A549 (cell line): ENCODE measurements at regions of chr7 and their contacts with region 1.

Region 1: DNA sequence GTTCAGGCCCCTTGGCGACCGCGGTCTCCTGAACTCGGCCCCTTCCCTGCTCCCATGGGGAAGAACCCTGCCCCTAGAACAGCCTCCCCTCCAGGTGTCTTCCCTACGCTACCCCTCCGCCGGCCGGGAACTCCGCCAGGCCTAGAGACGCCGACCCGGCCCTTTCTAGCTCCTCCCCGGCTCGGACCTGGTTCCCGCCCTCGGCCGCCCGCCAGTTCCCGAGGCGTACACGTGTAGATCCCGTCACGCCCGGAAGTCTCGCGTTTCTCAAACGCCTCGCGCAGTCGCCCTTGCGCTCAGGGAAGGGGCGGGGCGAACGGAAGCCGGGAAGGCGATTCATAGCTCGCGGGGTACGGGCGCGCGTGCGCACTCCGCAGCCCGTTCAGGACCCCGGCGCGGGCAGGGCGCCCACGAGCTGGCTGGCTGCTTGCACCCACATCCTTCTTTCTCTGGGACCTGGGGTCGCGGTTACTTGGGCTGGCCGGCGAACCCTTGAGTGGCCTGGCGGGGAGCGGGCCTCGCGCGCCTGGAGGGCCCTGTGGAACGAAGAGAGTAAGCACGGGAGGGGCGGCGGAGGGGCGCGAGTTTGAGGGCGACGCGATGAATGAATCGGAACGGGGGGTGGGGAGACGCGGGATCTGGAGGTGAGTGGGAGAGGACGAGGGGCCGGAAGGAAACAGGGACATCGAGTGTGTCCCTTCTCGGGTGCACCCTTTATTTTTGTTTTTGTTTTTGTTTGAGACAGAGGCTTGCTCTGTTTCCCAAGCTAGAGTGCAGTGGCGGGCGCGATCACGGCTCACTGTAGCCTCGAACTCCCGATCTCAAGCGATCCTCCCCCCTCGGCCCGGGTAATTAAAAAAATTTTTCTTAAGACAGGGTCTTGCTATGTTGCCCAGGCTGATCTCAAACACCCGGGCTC is at the start of gene POP7:
- DNase-seq: peak; percentile 91 to 99
- ATAC-seq: peak; percentile 95 to 96
- H3K4me3 ChIP-seq: peak within 1 kb of the TSS; percentile 76
- H3K27ac ChIP-seq: peak within 1 kb of the TSS; percentile 91 to 96
- H3K4me1 ChIP-seq: peaks cover 12% of the 10 kb centered on the region
- CTCF ChIP-seq: no peak
- EP300 ChIP-seq: no peak
- POLR2A ChIP-seq: peak; percentile 72
- RAD21 ChIP-seq: no peak
- polyA plus RNA-seq, gene POP7: 29.5 and 37.3 TPM in 2 replicates

Region 2: GRCh38 chr7:100342765-100343164 is 363.2 kb before region 1 on chr7:
- CTCF ChIA-PET with region 1: no interaction called
- POLR2A ChIA-PET with region 1: no interaction called
- DNase-seq: no peak
- ATAC-seq: no peak
- H3K4me3 ChIP-seq: no peak overlapping the region
- H3K27ac ChIP-seq: no peak overlapping the region
- H3K4me1 ChIP-seq: peaks cover 26% of the 10 kb centered on the region
- CTCF ChIP-seq: no peak
- EP300 ChIP-seq: no peak
- POLR2A ChIP-seq: no peak
- RAD21 ChIP-seq: no peak

Region 3: DNA sequence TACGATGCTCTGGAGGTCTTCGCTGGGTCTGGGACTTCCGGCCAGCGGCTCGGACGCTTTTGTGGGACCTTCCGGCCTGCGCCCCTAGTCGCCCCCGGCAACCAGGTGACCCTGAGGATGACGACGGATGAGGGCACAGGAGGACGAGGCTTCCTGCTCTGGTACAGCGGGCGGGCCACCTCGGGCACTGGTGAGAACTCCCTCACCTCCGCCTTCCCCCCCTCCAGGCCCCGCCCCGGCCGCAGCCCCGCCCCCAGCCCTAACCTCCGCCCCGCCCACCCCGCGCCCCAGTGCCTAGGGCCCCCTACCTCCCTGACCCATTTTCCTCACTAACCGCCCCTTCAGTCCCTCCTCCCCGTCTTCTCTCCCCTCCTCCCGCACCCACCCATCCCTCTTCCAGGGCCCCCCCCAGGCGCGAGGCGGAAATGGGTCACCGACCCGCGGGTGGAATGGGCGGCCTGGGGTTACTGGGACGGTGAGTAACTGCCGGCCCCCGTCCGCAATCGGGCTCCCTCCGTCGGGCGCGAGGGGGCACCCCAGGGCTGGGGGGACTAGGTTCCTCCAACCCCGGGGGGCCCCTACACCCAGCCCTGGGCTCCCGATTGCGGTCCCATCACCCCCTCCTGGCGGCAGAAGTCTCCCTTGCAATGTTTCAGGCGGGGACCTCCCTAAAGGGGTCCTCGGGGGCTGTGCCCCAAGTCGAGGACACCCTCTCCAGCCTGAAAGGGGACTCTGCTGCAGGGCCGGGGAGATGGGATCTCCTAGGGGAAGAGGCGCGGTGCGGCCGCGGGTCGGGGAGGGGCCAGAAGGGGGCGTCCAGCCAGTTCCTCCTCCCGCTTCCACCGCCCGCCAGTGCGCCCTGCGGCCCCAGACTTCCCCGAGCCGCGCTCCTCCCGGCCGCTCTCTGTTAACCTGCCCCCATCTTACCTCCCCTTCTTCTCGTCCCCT is 101.7 kb before region 1 on chr7:
- CTCF ChIA-PET with region 1: interaction called, 16 read pairs
- POLR2A ChIA-PET with region 1: no interaction called
- DNase-seq: peak; percentile 78 to 90
- ATAC-seq: peak; percentile 80 to 90
- H3K4me3 ChIP-seq: peak overlapping the region; percentile 74
- H3K27ac ChIP-seq: peak overlapping the region; percentile 84 to 86
- H3K4me1 ChIP-seq: 0 out of 3 replicates have a peak, but pooled peaks cover 8% of the 10 kb centered on the region
- CTCF ChIP-seq: peak; percentile 53
- EP300 ChIP-seq: no peak
- POLR2A ChIP-seq: peak; percentile 33; the same call in 1 of the 2 replicates
- RAD21 ChIP-seq: no peak; a peak in 3 of 5 replicates

Region 4: DNA sequence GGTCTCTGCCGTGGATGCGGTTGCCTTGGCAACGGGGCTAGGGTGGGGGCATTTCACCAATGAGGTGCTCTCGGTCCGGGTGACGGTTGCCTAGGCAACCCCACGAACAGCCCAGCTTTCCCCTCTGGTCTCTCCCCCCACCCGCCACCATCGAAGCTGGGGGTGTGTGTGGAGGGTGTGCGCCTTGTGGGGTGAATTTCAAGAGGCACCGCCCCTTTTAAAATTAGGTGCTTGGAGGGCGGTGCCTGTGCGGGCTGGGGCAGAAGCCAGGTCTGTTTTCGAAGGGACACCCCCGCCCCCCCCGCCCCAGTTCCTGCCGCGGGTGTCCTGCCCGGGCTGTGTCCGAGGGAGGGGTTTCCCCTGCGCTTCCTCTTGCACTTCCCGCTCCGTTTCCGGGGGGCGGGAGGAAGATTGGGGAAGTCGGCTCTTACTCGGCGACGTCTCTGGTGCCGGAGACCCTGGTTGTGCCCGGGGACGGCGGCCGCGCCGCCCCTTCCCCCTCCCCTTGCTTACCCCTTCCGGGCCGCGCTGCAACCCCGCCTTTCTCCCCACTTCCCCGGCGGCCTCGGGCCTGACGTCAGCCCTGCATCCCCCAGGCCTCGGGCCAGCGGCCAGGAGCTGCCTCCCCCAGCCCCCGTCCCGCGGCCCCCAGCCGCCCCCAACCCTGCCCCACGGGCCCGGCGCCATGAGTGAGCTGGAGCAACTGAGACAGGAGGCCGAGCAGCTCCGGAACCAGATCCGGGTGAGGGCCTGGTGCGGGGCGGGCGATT is 30.2 kb before region 1 on chr7:
- CTCF ChIA-PET with region 1: interaction called, 21 read pairs
- POLR2A ChIA-PET with region 1: interaction called, 9 read pairs
- DNase-seq: peak in 1 of 2 experiments; percentile 35
- ATAC-seq: no peak
- H3K4me3 ChIP-seq: peak overlapping the region; percentile 77
- H3K27ac ChIP-seq: peak overlapping the region; percentile 87 to 99; a peak in 5 of 6 replicates
- H3K4me1 ChIP-seq: peaks cover 27% of the 10 kb centered on the region
- CTCF ChIP-seq: no peak
- EP300 ChIP-seq: no peak
- POLR2A ChIP-seq: no peak
- RAD21 ChIP-seq: no peak

Region 5: GRCh38 chr7:100726996-100727761 is 21.2 kb after region 1 on chr7:
- CTCF ChIA-PET with region 1: interaction called, 266 read pairs
- POLR2A ChIA-PET with region 1: interaction called, 10 read pairs
- DNase-seq: no peak
- ATAC-seq: no peak
- H3K4me3 ChIP-seq: no peak overlapping the region
- H3K27ac ChIP-seq: no peak overlapping the region
- H3K4me1 ChIP-seq: peaks cover 23% of the 10 kb centered on the region
- CTCF ChIP-seq: no peak
- EP300 ChIP-seq: no peak
- POLR2A ChIP-seq: no peak
- RAD21 ChIP-seq: no peak

Region 6: DNA sequence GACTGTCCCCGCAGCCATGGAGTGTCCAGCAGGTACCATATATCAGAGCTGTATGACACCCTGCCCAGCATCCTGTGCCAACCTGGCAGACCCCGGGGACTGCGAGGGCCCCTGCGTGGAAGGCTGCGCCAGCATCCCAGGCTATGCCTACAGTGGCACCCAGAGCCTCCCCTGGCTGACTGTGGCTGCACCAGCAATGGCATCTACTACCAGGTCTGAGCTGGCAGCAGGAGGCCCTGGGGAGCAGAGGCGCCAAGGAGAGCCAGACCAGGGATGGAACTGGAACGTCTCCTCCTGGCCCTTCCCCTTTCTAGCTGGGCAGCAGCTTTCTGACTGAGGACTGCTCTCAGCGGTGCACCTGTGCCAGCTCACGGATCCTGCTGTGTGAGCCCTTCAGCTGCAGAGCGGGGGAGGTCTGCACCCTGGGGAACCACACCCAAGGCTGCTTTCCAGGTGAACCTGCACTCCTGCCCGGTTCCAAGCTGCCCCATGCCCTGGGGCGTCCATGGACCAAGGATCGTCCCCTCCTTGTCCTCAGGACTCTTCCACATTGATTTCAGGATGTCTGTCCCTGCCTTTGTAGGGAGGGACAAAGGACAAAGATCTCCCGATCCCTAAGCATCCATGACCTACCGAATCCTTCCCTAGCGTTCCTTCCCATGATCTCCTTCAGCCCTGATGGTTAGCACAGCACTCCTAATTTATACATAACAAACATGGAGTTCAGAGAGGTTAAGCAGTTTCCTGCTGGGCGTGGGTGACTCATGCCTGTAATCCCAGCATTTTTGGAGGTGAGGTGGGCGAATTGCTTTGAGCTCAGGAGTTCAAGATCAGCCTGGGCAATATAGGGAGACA is 88.0 kb after region 1 on chr7:
- CTCF ChIA-PET with region 1: interaction called, 35 read pairs
- POLR2A ChIA-PET with region 1: interaction called, 4 read pairs
- DNase-seq: no peak
- ATAC-seq: peak; percentile 26 to 31; a peak in 5 of 6 replicates
- H3K4me3 ChIP-seq: no peak overlapping the region
- H3K27ac ChIP-seq: peak overlapping the region in 1 of 2 experiments; percentile 60; a peak in 3 of 6 replicates
- H3K4me1 ChIP-seq: peaks cover 14% of the 10 kb centered on the region
- CTCF ChIP-seq: no peak
- EP300 ChIP-seq: no peak
- POLR2A ChIP-seq: no peak
- RAD21 ChIP-seq: no peak

Region 7: GRCh38 chr7:100827330-100828227 is 121.6 kb after region 1 on chr7 and contains the start of gene EPHB4:
- CTCF ChIA-PET with region 1: interaction called, 32 read pairs
- POLR2A ChIA-PET with region 1: interaction called, 16 read pairs
- DNase-seq: peak; percentile 73 to 91
- ATAC-seq: peak; percentile 84 to 92
- H3K4me3 ChIP-seq: peak within 1 kb of the TSS; percentile 100
- H3K27ac ChIP-seq: peak within 1 kb of the TSS; percentile 99
- H3K4me1 ChIP-seq: peaks cover 30% of the 10 kb centered on the region; the same call in 2 of the 3 replicates
- CTCF ChIP-seq: peak; percentile 64
- EP300 ChIP-seq: no peak
- POLR2A ChIP-seq: peak; percentile 75
- RAD21 ChIP-seq: peak; percentile 41 to 51
- polyA plus RNA-seq, gene EPHB4: 37.8 and 40.5 TPM in 2 replicates

Region 8: GRCh38 chr7:100889761-100890634 is 184.0 kb after region 1 on chr7:
- CTCF ChIA-PET with region 1: interaction called, 8 read pairs
- POLR2A ChIA-PET with region 1: interaction called, 10 read pairs
- DNase-seq: peak; percentile 93 to 96
- ATAC-seq: peak; percentile 68 to 91
- H3K4me3 ChIP-seq: peak overlapping the region; percentile 92
- H3K27ac ChIP-seq: peak overlapping the region; percentile 86 to 95
- H3K4me1 ChIP-seq: peaks cover 34% of the 10 kb centered on the region
- CTCF ChIP-seq: no peak
- EP300 ChIP-seq: no peak
- POLR2A ChIP-seq: peak; percentile 74
- RAD21 ChIP-seq: no peak

Region 9: DNA sequence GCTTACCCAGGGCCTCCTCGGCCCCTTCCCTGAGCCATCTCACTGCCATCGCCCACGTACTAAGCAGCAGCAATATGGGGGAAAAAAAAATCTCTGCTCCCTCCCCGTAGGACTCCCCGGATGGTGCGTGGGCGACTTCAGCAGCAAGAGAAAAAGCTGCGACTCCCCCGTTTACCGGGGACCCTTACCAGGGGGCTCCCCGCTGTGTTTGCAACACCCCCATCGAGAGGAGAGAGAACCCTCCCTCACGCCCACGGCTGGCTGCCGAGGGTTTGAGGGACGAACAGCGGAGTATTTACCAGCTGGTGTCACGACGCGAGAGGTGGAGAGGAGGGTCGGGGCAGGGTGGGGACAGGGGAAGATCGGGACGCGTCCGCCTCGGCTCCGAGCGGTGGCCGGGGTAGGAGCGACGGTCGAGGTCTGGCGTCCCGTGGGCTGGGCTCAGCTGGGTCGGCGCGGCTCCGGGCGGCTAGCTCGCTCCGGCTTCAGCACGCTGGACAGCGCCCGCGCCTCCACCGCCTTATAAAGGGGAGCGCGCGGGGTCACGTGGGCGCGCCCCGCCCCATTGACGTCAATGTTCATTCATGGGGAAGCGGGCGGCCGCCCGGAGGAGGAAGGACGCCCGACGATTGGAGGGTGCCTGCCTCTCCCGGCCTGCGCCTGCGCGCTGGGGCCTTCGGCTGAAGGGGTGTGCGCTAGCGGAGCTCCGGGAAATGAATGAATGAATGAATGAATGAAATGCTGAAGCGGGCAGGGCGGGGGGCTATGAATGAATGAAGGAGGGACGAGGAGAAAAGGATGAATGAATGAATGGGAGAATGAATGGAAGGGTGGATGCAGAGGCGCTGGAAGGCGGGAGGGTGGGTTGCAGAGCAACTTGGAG is 459.3 kb after region 1 on chr7 and contains the start of gene VGF:
- CTCF ChIA-PET with region 1: no interaction called
- POLR2A ChIA-PET with region 1: no interaction called
- DNase-seq: peak; percentile 92 to 96
- ATAC-seq: peak; percentile 51 to 74; a peak in 5 of 6 replicates
- H3K4me3 ChIP-seq: peak within 1 kb of the TSS; percentile 54
- H3K27ac ChIP-seq: peak within 1 kb of the TSS; percentile 9 to 83; a peak in 4 of 6 replicates
- H3K4me1 ChIP-seq: peaks cover 86% of the 10 kb centered on the region
- CTCF ChIP-seq: no peak
- EP300 ChIP-seq: no peak
- POLR2A ChIP-seq: 0 out of 2 replicates have a peak, but pooled peaks have one; percentile 21
- RAD21 ChIP-seq: no peak
- polyA plus RNA-seq, gene VGF: 0.16 and 0.21 TPM in 2 replicates